ENCODE measurements at regions of chr1 and their contacts with region 1.

Region 1: DNA sequence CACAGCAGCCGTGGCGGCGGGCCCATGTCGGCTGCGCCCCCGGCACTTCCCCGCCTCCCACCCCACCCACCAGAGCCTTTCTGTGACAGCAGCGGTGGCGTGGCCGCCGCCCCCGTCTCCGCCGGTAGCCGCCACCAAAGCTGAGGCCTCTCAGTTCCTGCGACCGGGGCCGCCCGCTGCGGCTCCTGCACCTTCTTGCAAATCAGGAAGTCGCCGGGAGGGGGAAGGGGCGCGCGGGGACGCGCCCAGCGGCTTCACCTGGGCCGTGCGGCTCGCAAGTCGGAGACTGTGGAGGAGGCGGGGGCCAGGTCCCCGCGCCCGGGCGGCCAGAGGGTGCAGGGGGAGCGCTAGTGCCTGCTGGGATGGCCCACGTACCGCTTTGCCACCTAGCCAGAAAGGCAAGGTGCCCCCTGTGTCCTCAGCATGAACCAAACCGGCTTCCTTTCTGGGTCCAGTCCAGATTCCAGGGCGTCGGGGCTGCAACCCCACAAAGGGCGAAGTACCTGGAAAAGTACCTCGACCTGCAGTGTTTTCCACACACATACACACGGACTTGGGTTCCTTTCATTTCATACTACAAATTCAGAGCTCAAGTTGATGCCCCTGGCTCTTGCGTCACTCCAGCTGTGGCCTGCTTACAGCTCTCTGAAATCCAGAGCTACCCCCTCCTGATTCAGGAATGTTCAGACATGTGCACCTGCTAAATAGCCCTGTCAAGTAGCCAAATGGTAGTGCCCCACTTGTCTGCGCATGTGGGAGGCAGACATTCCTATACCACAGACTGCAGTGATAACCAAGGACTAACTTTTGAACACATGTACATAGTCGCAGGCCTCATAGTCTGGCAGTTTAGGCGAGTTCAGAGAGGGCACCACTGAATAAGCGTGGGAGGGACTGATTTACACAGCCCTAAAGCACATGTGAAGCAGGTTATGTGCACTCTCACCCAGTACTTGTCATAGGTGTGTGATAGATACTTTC is at the start of gene DENND1B:
- DNase-seq: peak; percentile 68 to 90 (median 82)
- ATAC-seq: peak; percentile 69 to 84 (median 80)
- H3K4me3 ChIP-seq: peak within 1 kb of the TSS; percentile 65 to 87 (median 76)
- H3K27ac ChIP-seq: peak within 1 kb of the TSS; percentile 75 to 95 (median 91)
- H3K4me1 ChIP-seq: peaks cover 0 to 75% (median 35%) of the 10 kb centered on the region in 12 donors
- H3K27me3 ChIP-seq: no peaks in the 10 kb centered on the region
- CTCF ChIP-seq: peak in 1 of 12 donors; percentile 22
- POLR2A ChIP-seq: peak in 1 of 2 donors; percentile 14
- total RNA-seq, gene DENND1B: 16.0 to 31.4 (median 24.0) TPM

Region 2: DNA sequence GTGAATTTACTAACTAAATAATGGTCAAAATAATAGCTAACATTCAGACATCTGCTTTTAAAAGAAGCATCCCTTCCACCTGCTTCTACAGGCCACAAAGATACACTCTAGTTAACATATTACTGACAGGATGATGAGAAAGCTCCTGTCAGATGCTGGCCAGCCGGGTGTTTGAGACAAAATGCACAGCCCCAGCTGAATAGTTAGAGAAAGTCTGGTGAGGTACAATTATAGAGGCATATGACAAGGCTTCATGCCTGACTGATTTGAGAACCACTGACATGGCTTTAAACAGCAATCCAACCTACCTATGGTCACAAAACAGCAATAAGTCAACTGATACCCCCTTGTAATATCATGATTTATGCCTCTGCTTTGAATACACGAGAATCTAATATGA is 137.3 kb before region 1 on chr1:
- intact Hi-C with region 1: loop called in 2 of 10 experiments (anchors 10 kb)
- DNase-seq: no peak
- ATAC-seq: peak in 3 of 4 donors; percentile 71 to 84 (median 75)
- H3K4me3 ChIP-seq: no peak overlapping the region
- H3K27ac ChIP-seq: peak overlapping the region in 8 of 12 donors; percentile 6 to 61 (median 44)
- H3K4me1 ChIP-seq: peaks cover 0 to 16% (median 5%) of the 10 kb centered on the region in 12 donors
- H3K27me3 ChIP-seq: no peaks in the 10 kb centered on the region
- CTCF ChIP-seq: no peak
- POLR2A ChIP-seq: no peak

Region 3: GRCh38 chr1:197725044-197725443 is 50.5 kb before region 1 on chr1:
- intact Hi-C with region 1: no loop called
- DNase-seq: no peak
- ATAC-seq: no peak
- H3K4me3 ChIP-seq: no peak overlapping the region
- H3K27ac ChIP-seq: no peak overlapping the region
- H3K4me1 ChIP-seq: no peaks in the 10 kb centered on the region
- H3K27me3 ChIP-seq: no peaks in the 10 kb centered on the region
- CTCF ChIP-seq: no peak
- POLR2A ChIP-seq: no peak

Region 4: DNA sequence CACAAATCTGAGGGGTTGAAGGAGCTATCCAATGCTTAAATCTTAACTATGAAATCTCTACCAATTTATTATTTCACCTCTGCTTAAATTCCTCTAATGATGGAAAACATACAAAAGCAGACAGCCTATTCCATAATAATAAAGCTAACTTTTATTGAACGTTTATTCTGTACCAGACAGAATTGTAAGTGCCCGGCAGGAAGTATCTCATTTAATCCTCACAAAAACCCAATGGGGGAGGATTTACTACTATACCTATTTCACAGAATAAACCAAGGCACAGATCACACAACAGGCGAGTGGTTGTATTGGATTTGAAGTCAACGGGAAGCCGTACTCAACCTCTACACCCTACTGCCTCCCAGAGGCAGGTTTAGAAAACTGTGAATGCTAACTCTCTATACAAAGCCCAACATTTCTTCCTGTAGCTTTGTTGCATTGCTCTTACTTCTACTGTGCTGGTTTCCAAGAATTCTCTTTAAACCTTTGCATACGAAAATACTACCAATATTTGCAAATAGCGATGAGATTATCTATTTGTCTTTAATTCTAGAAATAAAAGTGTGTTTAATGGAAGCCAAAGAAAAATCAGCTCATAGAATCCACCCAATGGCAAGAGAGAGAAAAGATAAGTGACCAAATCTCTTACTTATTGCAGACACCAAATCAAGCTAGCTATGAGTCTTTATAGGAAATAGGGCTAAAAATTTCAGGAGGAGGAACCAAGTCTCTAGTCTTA is 93.3 kb after region 1 on chr1:
- intact Hi-C with region 1: loop called in 1 of 10 experiments (anchors 10 kb)
- DNase-seq: peak in 1 of 5 donors; percentile 13
- ATAC-seq: peak; percentile 51 to 89 (median 86)
- H3K4me3 ChIP-seq: no peak overlapping the region
- H3K27ac ChIP-seq: no peak overlapping the region
- H3K4me1 ChIP-seq: no peaks in the 10 kb centered on the region
- H3K27me3 ChIP-seq: no peaks in the 10 kb centered on the region
- CTCF ChIP-seq: peak; percentile 41 to 73 (median 61)
- POLR2A ChIP-seq: no peak